Caco-2 (cell line): ENCODE measurements at regions of chr17 and their contacts with region 1.

Region 1: GRCh38 chr17:71472809-71473789 is 647.7 kb upstream of the SOX9 start:
- DNase-seq: peak; percentile 43 to 57
- H3K4me3 ChIP-seq: no peak overlapping the region
- H3K4me3 Mint-ChIP-seq: no peak overlapping the region
- H3K27ac Mint-ChIP-seq: no peak overlapping the region
- H3K4me1 ChIP-seq: no peaks in the 10 kb centered on the region
- H3K4me1 Mint-ChIP-seq: no peaks in the 10 kb centered on the region
- H3K27me3 ChIP-seq: no peaks in the 10 kb centered on the region
- H3K27me3 Mint-ChIP-seq: peaks cover 9% of the 10 kb centered on the region
- CTCF ChIP-seq: peak; percentile 66 to 83

Region 2: DNA sequence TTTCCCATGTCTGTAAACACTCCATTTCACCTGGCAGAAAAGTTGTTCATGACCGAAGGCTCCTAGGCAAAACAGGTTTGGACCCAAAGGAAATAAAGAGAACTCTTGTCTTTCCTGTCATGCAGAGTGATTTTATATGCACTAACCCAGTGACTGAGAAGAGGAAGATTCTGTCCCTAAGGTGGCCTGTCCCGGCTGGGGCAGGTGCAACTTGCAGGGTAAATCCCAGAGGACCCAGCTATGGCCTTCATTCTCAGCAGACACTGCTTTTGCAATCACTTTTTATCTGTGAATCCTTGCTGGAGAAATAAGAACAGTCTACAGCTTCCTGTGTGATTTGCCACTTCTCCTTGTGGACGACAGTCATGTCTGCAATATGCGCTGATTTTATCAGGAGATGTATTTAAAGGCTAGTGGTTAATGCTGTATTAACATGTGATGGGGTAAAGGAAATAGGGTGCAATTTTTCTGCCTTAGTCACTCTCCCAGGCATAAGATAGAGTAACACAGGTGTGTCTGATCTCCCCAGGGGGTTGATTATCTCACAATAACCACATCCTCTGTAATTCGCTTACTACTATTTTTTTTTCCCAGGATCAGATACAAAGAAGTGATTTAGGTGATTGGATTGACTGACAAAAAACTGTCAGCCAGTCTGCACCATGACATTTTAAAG is 49.1 kb before region 1 on chr17:
- CTCF ChIA-PET with region 1: no interaction called
- POLR2A ChIA-PET with region 1: no interaction called
- intact Hi-C with region 1: no loop called
- DNase-seq: no peak
- H3K4me3 ChIP-seq: no peak overlapping the region
- H3K4me3 Mint-ChIP-seq: no peak overlapping the region
- H3K27ac Mint-ChIP-seq: no peak overlapping the region
- H3K4me1 ChIP-seq: no peaks in the 10 kb centered on the region
- H3K4me1 Mint-ChIP-seq: no peaks in the 10 kb centered on the region
- H3K27me3 ChIP-seq: 0 out of 2 replicates have a peak, but pooled peaks cover 2% of the 10 kb centered on the region
- H3K27me3 Mint-ChIP-seq: peaks cover 7% of the 10 kb centered on the region
- CTCF ChIP-seq: no peak

Region 3: DNA sequence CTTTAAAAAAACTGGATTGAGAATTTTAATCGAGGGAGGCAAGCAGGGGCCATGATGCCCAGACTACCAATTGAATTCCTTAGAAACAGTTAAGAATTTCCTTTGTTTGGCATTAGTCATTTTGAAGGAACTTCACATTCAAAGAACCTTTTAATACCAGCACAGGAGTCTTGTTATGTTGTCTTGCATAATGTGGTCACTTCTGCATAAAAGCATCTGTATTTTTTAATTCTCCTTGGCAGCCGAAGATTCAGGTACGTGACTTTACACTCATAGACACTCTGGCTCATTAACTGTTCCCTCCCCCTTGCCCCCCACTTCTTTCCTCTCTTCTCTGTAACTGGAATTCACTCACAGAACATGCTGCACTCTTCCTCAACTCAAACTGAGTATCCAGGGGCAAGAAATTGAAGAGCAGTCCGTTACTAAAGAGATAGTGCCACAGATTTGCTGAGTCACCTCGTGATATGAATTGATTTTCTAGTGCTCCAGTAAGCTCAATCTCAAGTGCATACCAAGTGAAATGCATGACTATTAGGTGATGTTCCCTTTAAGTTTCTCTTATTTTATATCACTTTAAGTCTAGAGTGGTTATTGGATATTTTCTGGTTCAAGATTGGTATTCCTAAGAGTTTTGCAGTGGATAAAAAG is 75.6 kb after region 1 on chr17:
- CTCF ChIA-PET with region 1: no interaction called
- POLR2A ChIA-PET with region 1: no interaction called
- intact Hi-C with region 1: no loop called
- DNase-seq: no peak
- H3K4me3 ChIP-seq: no peak overlapping the region
- H3K4me3 Mint-ChIP-seq: no peak overlapping the region
- H3K27ac Mint-ChIP-seq: no peak overlapping the region
- H3K4me1 ChIP-seq: no peaks in the 10 kb centered on the region
- H3K4me1 Mint-ChIP-seq: no peaks in the 10 kb centered on the region
- H3K27me3 ChIP-seq: no peaks in the 10 kb centered on the region
- H3K27me3 Mint-ChIP-seq: peaks cover 4% of the 10 kb centered on the region
- CTCF ChIP-seq: no peak

Region 4: DNA sequence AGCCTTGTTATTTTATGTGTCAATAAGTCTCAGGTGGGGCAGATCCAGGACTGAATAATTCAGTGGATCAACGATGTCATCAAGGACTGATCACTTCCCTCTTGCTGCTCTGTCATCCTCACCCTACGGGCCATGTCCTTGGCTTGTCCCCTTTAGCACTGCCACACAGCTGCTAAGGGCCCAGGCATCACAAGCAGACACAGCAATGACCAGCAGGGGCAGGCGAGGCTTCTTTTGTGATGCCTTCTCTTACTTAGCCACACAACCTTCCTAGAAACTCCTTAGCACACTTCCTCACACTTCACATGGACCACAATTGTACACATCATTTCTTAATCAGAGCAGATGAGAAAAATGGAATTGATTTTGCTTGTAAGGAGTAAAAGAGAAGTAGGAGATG is 291.4 kb after region 1 on chr17:
- CTCF ChIA-PET with region 1: no interaction called
- POLR2A ChIA-PET with region 1: no interaction called
- intact Hi-C with region 1: loop called (anchors 10 kb)
- DNase-seq: peak; percentile 44 to 46
- H3K4me3 ChIP-seq: no peak overlapping the region
- H3K4me3 Mint-ChIP-seq: no peak overlapping the region
- H3K27ac Mint-ChIP-seq: no peak overlapping the region
- H3K4me1 ChIP-seq: no peaks in the 10 kb centered on the region
- H3K4me1 Mint-ChIP-seq: no peaks in the 10 kb centered on the region
- H3K27me3 ChIP-seq: no peaks in the 10 kb centered on the region
- H3K27me3 Mint-ChIP-seq: peaks cover 5% of the 10 kb centered on the region
- CTCF ChIP-seq: peak; percentile 51 to 65

Region 5: GRCh38 chr17:72539981-72540897 is 1067.1 kb after region 1 on chr17:
- CTCF ChIA-PET with region 1: interaction called, 4 read pairs
- POLR2A ChIA-PET with region 1: no interaction called
- intact Hi-C with region 1: loop called (anchors 1 kb)
- DNase-seq: peak in 1 of 2 experiments; percentile 88
- H3K4me3 ChIP-seq: no peak overlapping the region
- H3K4me3 Mint-ChIP-seq: peak overlapping the region; percentile 41
- H3K27ac Mint-ChIP-seq: peak overlapping the region; percentile 53
- H3K4me1 ChIP-seq: peaks cover 5% of the 10 kb centered on the region; the same call in 1 of the 2 replicates
- H3K4me1 Mint-ChIP-seq: peaks cover 14% of the 10 kb centered on the region
- H3K27me3 ChIP-seq: no peaks in the 10 kb centered on the region
- H3K27me3 Mint-ChIP-seq: no peaks in the 10 kb centered on the region
- CTCF ChIP-seq: peak; percentile 76 to 92